ENCODE measurements at regions of chr10 and their contacts with region 1.

Region 1: DNA sequence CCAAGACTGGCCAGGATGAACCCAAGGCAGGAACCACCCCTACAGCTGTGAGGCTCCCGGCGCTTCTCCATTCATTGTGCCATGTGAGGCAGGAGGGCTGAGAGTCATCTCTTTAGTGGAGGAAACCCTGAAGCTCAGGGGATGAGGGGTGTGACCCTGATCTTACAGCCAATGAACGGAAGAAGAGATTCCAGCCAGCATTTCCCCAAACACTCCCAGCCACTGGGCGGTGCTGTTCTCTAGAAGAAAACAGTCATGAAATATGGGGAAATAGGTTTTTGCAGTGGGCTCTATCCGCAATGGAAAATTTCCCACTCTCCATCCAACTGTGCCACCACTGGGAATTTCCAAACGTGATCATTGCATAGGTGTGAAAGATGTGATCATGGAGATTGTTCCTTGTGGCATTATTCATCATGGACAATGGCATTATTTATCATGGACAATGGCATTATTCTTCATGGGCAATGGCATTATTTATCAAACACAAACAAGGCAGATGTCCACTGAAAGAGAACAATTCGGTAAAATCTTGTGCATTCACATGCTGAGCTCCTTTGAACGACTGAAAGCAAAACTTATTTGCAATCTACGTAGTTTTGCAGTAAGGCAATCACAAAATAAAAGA is 14.0 kb upstream of the SLC18A2 start:
- DNase-seq: no peak
- ATAC-seq: peak; percentile 60 to 81 (median 68)
- H3K4me3 ChIP-seq: no peak overlapping the region
- H3K27ac ChIP-seq: no peak overlapping the region
- H3K4me1 ChIP-seq: no peaks in the 10 kb centered on the region
- H3K27me3 ChIP-seq: no peaks in the 10 kb centered on the region
- CTCF ChIP-seq: peak; percentile 47 to 61 (median 50)
- POLR2A ChIP-seq: no peak

Region 2: DNA sequence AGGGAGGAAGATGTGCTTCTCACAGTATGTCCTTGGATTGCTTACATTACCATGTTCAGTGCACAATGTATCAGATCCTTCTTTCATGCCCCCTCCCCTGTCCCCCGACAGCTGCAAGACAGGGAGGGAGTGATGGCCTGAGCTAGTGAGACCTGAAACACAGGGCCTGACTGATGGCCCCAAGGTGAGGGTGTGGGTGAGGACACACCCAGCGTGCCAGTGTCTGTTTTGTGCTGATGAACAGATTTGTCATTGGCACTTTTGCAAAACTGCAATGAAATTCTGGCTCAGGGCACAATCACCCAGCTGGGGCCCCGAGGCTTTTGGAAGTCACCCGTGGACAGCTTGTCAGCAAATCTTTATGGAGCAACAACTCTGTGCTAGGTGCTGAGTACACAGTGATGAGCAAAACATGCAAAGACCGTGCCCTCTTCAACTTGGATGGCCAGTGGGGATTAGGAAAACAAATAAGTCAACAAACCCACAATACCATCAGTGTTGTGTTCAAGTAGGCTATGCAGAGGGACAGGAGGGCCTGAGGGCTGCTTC is 256.2 kb after region 1 on chr10:
- intact Hi-C with region 1: loop called in 1 of 2 experiments (anchors 10 kb)
- DNase-seq: no peak
- ATAC-seq: no peak
- H3K4me3 ChIP-seq: no peak overlapping the region
- H3K27ac ChIP-seq: no peak overlapping the region
- H3K4me1 ChIP-seq: peaks cover 0 to 4% (median 0%) of the 10 kb centered on the region in 4 donors
- H3K27me3 ChIP-seq: no peaks in the 10 kb centered on the region
- CTCF ChIP-seq: no peak
- POLR2A ChIP-seq: no peak